Cardiac septum (tissue), 1 donor: ENCODE measurements at regions of chr11 and their contacts with region 1.

Region 1: DNA sequence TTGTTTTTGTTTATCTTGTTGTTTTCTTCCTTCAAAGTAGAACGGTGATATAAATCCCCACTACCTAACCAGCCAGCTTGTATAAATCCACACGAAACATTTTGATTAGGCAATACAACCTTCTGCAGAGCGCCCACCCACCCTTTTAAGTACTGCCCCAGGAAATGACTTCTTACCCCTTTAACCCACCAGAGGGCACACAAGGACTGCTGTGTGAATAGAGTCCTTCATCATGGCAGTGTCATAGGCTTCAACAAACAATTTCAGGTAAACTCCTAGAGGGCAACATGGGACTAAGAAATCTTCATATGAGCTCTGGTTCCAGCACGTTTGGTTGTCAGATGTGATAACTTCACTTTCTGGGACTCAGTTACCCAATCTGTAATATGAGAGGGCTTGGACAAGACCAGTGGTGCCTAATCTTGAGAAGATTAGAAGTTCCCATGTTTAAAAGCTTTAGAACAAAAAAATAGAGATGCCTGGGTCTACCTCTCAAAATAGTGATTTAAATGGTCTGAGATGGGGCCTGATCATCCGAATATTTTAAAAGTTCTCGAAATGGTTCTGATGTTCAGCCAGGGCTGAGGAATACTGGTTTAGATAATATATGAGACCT is 56.1 kb downstream of the PIWIL4 start:
- DNase-seq: no peak

Region 2: GRCh38 chr11:94325681-94326080 is 297.5 kb before region 1 on chr11:
- intact Hi-C with region 1: no loop called
- DNase-seq: no peak

Region 3: GRCh38 chr11:94767761-94768601 is 144.8 kb after region 1 on chr11 and contains the start of gene AMOTL1:
- intact Hi-C with region 1: loop called (anchors 10 kb)
- DNase-seq: peak; percentile 93
- total RNA-seq, gene AMOTL1: 60.1 TPM

Region 4: GRCh38 chr11:94897330-94897768 is 274.1 kb after region 1 on chr11:
- intact Hi-C with region 1: loop called (anchors 2 kb)
- DNase-seq: no peak

Region 5: DNA sequence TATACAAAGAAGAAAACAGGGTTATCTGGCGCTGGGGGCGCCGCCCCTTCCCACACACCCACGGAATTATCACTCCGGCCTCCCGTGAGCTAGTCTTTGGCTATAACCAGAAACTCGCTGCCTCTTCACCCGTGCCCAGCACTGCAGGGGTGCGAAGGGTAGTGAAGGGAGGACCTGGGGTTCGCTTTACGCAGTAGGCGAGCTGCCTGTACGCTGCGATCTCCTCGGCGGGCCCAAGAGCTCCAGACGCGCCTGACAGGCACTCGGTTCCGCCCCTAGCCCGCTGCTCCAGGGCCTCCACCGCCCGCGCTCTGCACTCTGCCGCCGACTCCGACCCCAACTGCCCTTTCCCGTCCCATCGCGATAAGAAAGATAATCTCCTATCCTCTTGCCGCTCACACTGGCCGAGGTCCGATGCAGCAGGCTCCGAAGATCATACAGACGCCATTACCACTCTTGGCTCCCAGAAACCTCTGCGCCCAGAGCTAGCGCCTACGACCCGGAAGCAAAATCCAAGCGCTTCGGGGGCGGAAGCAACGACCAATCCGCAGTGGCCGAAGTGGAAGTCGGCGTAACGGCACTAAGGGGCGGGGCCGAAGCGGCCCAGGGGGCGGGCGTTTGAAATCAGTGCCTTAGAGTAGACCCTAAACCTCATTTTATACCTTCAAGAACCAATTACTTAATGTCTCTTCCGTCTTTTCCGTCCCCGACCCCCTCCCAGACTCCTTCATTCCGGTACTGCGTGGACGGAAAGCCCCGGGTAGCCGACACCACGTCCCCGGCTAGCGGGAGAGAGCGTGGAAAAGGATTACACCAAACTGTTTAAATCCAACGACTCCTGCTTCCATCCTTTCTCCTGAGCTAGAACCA is 350.1 kb after region 1 on chr11 and contains the starts of genes CWC15 and KDM4D:
- intact Hi-C with region 1: loop called (anchors 10 kb)
- DNase-seq: peak; percentile 98
- total RNA-seq, gene CWC15: 57.8 TPM
- total RNA-seq, gene KDM4D: 0.83 TPM

Region 6: DNA sequence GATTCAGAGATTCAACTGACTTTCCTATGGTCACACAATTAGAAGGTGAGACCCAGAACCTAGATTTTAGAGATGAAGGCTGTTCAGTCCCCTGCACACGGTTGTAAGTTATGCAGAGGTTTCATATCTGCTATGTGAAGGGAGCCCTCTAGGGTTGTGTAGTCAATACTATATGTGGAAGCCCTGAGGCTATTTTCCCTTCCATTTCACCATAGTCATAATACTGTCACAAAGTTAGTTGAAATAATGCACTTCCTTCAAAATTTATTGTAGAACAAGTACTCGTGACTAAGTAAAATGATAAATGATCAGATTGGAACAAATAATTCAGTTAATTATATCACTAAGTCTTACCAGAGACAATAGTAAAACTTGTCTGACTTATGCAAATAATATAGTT is 515.2 kb after region 1 on chr11:
- intact Hi-C with region 1: loop called (anchors 10 kb)
- DNase-seq: no peak